ENCODE measurements at regions of chr14 and their contacts with region 1.

Region 1: DNA sequence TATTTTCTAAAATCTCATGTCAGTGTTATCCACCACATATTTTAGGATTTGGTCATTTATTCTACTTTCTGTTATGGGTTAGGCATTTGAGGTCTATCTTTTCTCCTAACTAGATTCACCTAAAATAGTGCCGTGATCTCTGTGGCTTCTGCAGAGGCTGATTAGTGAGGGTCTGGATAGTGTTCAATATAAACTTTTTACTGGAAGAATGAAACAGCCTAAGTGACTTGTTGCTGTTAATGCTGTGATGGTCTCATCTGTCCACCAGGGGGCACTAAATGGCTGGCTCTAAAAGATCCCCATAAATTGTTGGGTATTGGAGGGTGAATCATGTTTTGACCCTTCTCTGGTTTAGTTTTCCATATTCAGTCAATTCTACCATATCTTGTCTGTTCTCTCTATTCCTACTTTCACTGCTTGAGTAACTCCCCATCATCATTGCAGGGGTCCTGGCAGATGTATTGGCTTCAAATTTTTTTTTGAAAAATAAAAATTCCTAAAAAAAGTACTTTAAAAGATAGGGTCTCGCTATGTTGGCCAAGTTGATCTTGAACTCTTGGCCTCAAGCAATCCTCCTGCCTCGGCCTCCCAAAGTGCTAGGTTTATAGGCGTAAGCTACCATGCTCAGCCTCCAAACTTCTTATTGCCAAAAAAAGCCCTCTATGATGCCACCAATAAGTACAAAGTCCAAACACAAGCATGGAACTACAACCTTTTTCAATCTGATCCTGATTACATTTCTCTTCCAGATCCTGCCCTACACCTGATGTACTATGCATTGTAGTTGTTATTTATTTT is 6.9 kb downstream of the PABPN1 start:
- DNase-seq: peak; percentile 47
- H3K4me3 Mint-ChIP-seq: no peak overlapping the region
- H3K27ac Mint-ChIP-seq: no peak overlapping the region
- H3K4me1 Mint-ChIP-seq: peaks cover 4% of the 10 kb centered on the region
- H3K27me3 Mint-ChIP-seq: peaks cover under 1% of the 10 kb centered on the region

Region 2: GRCh38 chr14:23352511-23353432 is 24.6 kb after region 1 on chr14 and contains the start of gene SLC22A17:
- intact Hi-C with region 1: loop called (anchors 2 kb)
- DNase-seq: peak; percentile 27
- H3K4me3 Mint-ChIP-seq: peak within 1 kb of the TSS; percentile 76
- H3K27ac Mint-ChIP-seq: no peak within 1 kb of the TSS
- H3K4me1 Mint-ChIP-seq: peaks cover 5% of the 10 kb centered on the region
- H3K27me3 Mint-ChIP-seq: peaks cover 32% of the 10 kb centered on the region
- total RNA-seq, gene SLC22A17: 3.1 and 5.0 TPM in 2 replicates

Region 3: DNA sequence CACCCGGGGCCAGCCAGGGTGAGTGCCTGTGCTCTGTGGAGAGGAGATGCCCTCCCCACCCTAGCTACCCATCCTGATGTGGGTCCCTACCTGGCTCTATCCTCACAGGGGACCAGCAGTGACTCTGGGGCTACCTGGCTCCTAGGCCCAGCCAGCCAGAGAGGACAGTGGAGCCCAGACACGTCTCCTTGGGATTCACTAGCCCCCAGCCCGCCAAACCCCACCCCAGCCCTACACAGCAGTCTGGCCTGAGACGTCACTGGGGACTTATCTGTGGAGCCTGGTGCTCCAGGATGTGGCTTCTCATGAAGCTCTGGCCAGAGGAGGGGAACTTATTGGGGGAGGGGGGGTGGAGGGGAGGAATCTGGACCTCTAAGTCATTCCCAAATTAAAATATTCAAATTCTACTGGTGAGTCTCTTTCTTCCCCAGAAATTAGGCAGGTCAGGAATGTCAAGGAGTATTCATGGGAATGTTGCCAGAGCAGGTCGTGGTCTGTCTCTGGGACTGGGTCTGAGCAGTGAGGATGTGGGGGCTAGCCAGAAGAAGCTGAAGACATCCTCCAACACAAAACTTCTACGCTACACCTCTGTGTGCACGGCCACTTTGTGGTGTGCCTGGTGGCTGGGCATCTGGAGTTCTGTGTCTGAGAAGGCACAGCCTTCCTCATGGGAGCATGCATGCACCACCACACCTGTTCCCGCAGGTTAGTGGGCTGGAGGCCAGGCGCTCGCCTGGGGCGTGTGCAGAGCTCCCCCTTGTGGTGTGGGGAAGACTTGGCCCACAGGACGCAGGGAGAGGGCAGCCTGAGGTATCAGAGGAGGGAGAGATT is 51.4 kb after region 1 on chr14:
- intact Hi-C with region 1: loop called (anchors 1 kb)
- DNase-seq: peak; percentile 48
- H3K4me3 Mint-ChIP-seq: no peak overlapping the region
- H3K27ac Mint-ChIP-seq: no peak overlapping the region
- H3K4me1 Mint-ChIP-seq: no peaks in the 10 kb centered on the region
- H3K27me3 Mint-ChIP-seq: peaks cover 2% of the 10 kb centered on the region

Region 4: DNA sequence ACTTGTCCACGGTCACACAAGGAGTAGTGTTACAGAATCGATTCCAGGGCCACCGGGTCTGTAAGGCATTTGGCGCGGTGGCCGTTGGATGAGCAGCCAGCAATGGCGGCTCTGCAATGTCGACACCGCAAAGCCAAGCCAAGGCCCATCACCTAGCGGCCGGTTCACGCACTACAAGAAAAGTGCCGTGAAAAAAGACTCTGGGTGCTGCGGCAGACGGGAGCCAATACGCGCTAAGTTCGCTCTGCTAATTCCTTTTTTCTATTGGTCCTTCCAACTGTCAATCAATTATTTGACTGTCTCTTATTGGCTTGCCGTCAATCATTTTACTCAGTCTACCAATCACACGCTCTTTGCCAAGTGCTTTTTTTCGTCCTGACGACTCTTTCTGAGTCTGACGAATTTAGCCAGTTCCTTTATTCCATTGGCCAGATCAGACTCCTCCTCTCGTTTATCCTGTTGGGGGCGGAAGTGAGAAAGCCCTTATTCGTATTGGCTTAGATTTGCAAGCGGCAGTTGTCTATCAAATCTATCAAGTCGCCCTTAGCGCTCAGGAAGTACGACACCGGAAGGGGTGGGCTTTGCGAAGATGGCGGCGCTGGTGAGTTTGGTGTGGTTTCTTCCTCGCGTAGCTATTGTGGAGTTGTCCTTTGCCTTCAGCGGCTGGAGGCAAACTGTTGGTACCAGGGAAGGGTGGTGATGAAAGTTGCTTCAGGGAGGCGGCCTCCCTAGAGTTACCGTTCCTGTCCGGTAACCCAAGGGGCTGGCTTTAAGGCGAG is 141.2 kb after region 1 on chr14 and contains the start of gene NGDN:
- intact Hi-C with region 1: loop called (anchors 1 kb)
- DNase-seq: peak; percentile 89
- H3K4me3 Mint-ChIP-seq: no peak within 1 kb of the TSS
- H3K27ac Mint-ChIP-seq: peak within 1 kb of the TSS; percentile 45
- H3K4me1 Mint-ChIP-seq: peaks cover 11% of the 10 kb centered on the region
- H3K27me3 Mint-ChIP-seq: peaks cover 2% of the 10 kb centered on the region
- total RNA-seq, gene NGDN: 80.1 and 84.5 TPM in 2 replicates

Region 5: GRCh38 chr14:23640524-23641141 is 312.5 kb after region 1 on chr14:
- intact Hi-C with region 1: no loop called
- DNase-seq: no peak
- H3K4me3 Mint-ChIP-seq: no peak overlapping the region
- H3K27ac Mint-ChIP-seq: no peak overlapping the region
- H3K4me1 Mint-ChIP-seq: no peaks in the 10 kb centered on the region
- H3K27me3 Mint-ChIP-seq: no peaks in the 10 kb centered on the region